Naive thymus-derived CD4-positive, alpha-beta T cell (primary cell): ENCODE measurements at regions of chr17 and their contacts with region 1.

Region 1: DNA sequence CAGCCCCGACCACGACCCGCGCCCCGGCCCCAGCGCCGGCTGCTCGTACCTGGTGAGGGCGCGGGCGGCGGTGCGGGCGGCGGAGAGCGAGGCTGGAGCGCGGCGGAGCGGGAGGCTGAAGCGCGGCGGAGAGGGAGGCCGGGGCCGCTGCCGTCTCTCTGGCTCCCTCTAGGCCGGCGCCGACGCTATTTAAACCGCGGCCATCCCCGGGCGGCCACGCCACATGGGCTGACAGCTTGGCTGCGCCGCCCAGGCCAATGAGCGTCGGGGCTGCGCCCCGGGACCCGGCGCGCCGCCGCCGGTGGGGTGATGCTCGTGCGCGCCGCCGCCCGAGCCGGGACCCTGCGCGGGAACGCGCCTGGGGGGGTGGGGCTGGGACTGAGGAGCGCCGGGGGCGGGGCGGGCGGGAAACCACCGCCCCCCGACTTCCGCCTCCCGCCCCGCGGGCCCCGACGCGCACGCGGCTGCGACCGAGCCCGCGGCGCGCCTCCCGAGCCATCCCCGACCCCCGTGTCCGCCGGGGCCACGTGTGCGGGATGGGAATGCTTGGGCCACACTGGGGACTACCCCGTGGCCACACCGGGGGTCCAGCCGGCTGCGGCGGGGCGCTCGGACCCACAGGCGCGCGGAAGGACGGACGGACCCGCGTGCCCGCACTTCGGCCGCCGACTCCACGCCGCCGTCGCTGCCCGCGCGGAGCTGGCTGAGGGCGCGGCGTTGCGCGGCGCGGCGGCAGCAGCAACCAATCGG is at the start of gene FASN:
- DNase-seq: peak; percentile 84 to 93 (median 90)
- ATAC-seq: peak; percentile 87
- H3K4me3 ChIP-seq: peak within 1 kb of the TSS; percentile 61
- H3K4me3 Mint-ChIP-seq: peak within 1 kb of the TSS in 9 of 10 donors; percentile 36 to 84 (median 69)
- H3K27ac ChIP-seq: peak within 1 kb of the TSS; percentile 97
- H3K27ac Mint-ChIP-seq: peak within 1 kb of the TSS in 4 of 9 donors; percentile 63 to 80 (median 72)
- H3K4me1 ChIP-seq: peaks cover 4 to 12% of the 10 kb centered on the region in 2 donors
- H3K4me1 Mint-ChIP-seq: peaks cover 0 to 14% (median 7%) of the 10 kb centered on the region in 7 donors
- H3K27me3 ChIP-seq: no peaks in the 10 kb centered on the region
- H3K27me3 Mint-ChIP-seq: no peaks in the 10 kb centered on the region
- total RNA-seq, gene FASN: 24.3 to 168 (median 59.0) TPM

Region 2: DNA sequence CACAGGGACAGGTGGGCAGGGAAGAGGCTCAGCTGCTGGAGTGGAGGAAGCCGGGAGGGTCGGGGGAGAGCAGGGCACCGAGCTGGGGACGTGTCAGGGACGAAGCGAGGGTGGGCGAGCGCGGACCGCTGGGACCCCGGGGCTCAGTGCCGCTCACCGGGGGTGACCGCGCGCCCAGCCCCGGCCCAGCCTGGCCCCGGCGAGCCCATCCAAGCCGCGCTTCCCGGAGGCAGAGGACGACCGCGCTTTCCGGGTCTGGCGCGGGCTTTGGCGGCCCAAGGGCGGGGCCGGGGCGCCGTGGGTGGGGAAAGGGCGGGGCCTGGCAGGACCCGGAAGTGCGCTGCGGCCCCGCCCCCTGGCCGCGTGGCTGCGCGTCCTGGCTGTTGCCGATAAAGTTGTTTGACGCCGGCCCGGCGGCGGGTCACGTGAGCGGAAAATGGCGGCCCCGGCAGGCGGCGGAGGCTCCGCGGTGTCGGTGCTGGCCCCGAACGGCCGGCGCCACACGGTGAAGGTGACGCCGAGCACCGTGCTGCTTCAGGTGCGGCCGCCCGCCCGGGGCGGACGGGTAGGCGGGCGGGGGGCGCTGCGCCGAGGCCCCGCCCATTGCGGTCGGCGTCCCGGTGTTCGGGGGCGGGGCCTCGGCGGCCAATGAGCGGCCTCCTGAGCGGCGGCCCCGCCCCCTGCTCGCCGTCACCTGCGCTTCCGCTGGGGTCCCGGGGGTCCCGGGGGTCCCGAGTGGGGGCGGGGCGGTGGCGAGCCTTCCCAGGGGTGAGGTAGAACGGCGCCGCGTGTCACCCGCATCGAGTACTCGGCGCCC is 120.8 kb before region 1 on chr17 and contains the start of gene ASPSCR1:
- CTCF ChIA-PET with region 1: no interaction called
- POLR2A ChIA-PET with region 1: interaction called, 3 read pairs
- intact Hi-C with region 1: loop called in 1 of 2 experiments (anchors 1 kb)
- DNase-seq: peak; percentile 86 to 96 (median 93)
- ATAC-seq: peak; percentile 98
- H3K4me3 ChIP-seq: peak within 1 kb of the TSS; percentile 79
- H3K4me3 Mint-ChIP-seq: peak within 1 kb of the TSS; percentile 93 to 99 (median 96)
- H3K27ac ChIP-seq: peak within 1 kb of the TSS; percentile 90
- H3K27ac Mint-ChIP-seq: peak within 1 kb of the TSS; percentile 94 to 99 (median 97)
- H3K4me1 ChIP-seq: peaks cover 16 to 19% of the 10 kb centered on the region in 2 donors
- H3K4me1 Mint-ChIP-seq: peaks cover 26 to 51% (median 38%) of the 10 kb centered on the region in 7 donors
- H3K27me3 ChIP-seq: no peaks in the 10 kb centered on the region
- H3K27me3 Mint-ChIP-seq: peaks cover 0 to 7% (median 0%) of the 10 kb centered on the region in 5 donors
- total RNA-seq, gene ASPSCR1: 36.4 to 46.7 (median 46.0) TPM

Region 3: DNA sequence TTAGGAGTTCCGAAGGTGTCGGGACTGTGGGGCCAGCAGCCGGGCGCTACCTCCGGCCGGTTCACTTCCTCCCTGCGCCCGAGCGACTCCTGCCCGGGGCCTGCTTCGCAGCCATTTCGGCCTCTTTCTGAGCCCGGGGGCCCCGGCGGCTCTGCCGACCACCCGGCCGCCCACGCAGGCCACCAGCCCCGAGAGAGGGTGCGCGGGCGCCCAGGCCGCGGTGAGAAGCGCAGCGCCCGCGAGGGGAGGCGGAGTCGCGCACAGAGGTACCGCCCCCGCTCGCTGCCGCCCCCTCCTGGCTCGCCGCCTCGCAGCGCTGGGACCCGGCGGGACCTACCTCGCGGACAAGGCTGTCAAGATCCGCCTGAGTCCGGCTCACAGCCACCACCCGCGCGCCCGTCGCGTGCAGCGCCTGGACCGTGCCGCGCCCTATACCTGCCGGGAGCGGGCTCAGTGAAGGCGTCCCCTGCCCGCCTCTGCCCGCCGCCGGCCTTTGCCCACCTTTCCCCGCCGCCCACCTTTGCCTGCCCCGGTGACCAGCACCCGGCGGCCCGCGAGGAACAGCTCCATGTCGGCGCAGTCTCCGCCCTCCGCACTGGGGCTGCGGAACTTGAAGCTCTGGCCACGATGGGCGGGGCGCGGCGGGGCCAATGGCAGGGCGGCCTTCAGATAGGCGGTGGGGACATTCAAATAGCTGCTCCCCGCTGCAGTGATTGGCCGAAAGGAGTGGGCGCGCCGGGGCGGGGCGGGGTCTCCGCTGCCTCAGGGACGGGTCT is 60.9 kb before region 1 on chr17 and contains the start of gene DCXR:
- CTCF ChIA-PET with region 1: interaction called, 3 read pairs
- POLR2A ChIA-PET with region 1: interaction called, 4 read pairs
- intact Hi-C with region 1: loop called (anchors 1 to 10 kb)
- DNase-seq: peak; percentile 87 to 97 (median 93)
- ATAC-seq: peak; percentile 96
- H3K4me3 ChIP-seq: peak within 1 kb of the TSS; percentile 71
- H3K4me3 Mint-ChIP-seq: peak within 1 kb of the TSS; percentile 82 to 94 (median 89)
- H3K27ac ChIP-seq: peak within 1 kb of the TSS; percentile 75
- H3K27ac Mint-ChIP-seq: peak within 1 kb of the TSS; percentile 61 to 94 (median 90)
- H3K4me1 ChIP-seq: peaks cover 7% of the 10 kb centered on the region in 2 donors
- H3K4me1 Mint-ChIP-seq: peaks cover 14 to 29% (median 24%) of the 10 kb centered on the region in 7 donors
- H3K27me3 ChIP-seq: no peaks in the 10 kb centered on the region
- H3K27me3 Mint-ChIP-seq: no peaks in the 10 kb centered on the region
- total RNA-seq, gene DCXR: 63.0 to 130 (median 83.6) TPM

Region 4: GRCh38 chr17:82065638-82066303 is 32.5 kb before region 1 on chr17 and contains the start of gene DUS1L:
- CTCF ChIA-PET with region 1: no interaction called
- POLR2A ChIA-PET with region 1: interaction called, 4 read pairs
- intact Hi-C with region 1: loop called (anchors 1 kb)
- DNase-seq: peak; percentile 55 to 87 (median 71)
- ATAC-seq: peak; percentile 95
- H3K4me3 ChIP-seq: peak within 1 kb of the TSS; percentile 66
- H3K4me3 Mint-ChIP-seq: peak within 1 kb of the TSS; percentile 73 to 91 (median 82)
- H3K27ac ChIP-seq: peak within 1 kb of the TSS; percentile 86
- H3K27ac Mint-ChIP-seq: peak within 1 kb of the TSS; percentile 86 to 95 (median 93)
- H3K4me1 ChIP-seq: peaks cover 8 to 27% of the 10 kb centered on the region in 2 donors
- H3K4me1 Mint-ChIP-seq: peaks cover 0 to 18% (median 10%) of the 10 kb centered on the region in 7 donors
- H3K27me3 ChIP-seq: no peaks in the 10 kb centered on the region
- H3K27me3 Mint-ChIP-seq: no peaks in the 10 kb centered on the region
- total RNA-seq, gene DUS1L: 127 to 157 (median 147) TPM

Region 5: DNA sequence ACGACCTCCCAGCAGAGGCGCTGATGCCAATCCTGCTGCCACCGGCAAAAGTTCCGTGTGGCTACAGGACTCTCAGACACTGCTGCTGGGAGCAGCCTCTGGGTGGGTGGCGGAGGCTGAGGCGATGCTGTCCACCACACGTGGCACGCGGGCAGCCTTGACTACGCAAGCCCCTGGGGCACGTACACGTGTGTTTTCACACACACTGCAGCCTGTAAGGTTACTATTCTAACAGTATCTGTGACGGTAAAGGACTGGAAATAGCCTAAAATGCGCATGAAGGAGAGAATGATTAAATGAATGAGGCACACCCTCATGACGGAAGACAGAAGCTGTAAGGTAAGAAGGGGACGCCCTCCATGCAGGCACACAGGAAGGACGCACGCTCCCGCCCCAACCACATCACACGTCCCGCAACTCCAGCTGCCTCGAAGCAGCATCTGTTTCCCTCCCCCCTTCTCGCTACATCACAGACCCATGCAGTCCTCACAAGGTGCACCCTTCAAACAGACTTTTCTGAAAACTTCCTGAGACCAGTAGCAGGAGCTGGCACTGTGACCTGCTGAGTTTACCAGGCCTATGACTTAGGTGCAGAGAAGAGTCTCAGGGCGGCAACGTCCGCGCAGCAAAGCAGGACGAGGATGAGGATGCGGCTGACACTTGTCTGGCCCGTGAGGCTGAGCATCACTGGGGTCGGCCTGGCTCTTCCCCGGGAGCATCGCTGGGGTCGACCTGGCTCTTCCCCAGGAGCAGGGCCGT is 28.5 kb after region 1 on chr17:
- CTCF ChIA-PET with region 1: interaction called, 12 read pairs
- POLR2A ChIA-PET with region 1: interaction called, 28 read pairs
- intact Hi-C with region 1: loop called in 1 of 2 experiments (anchors 1 kb)
- DNase-seq: peak; percentile 51 to 99 (median 98)
- ATAC-seq: peak; percentile 92
- H3K4me3 ChIP-seq: peak overlapping the region; percentile 36
- H3K4me3 Mint-ChIP-seq: peak overlapping the region; percentile 71 to 87 (median 84)
- H3K27ac ChIP-seq: peak overlapping the region; percentile 97
- H3K27ac Mint-ChIP-seq: peak overlapping the region; percentile 93 to 100 (median 98)
- H3K4me1 ChIP-seq: peaks cover 36 to 78% of the 10 kb centered on the region in 2 donors
- H3K4me1 Mint-ChIP-seq: peaks cover 33 to 83% (median 65%) of the 10 kb centered on the region in 7 donors
- H3K27me3 ChIP-seq: no peaks in the 10 kb centered on the region
- H3K27me3 Mint-ChIP-seq: no peaks in the 10 kb centered on the region

Region 6: DNA sequence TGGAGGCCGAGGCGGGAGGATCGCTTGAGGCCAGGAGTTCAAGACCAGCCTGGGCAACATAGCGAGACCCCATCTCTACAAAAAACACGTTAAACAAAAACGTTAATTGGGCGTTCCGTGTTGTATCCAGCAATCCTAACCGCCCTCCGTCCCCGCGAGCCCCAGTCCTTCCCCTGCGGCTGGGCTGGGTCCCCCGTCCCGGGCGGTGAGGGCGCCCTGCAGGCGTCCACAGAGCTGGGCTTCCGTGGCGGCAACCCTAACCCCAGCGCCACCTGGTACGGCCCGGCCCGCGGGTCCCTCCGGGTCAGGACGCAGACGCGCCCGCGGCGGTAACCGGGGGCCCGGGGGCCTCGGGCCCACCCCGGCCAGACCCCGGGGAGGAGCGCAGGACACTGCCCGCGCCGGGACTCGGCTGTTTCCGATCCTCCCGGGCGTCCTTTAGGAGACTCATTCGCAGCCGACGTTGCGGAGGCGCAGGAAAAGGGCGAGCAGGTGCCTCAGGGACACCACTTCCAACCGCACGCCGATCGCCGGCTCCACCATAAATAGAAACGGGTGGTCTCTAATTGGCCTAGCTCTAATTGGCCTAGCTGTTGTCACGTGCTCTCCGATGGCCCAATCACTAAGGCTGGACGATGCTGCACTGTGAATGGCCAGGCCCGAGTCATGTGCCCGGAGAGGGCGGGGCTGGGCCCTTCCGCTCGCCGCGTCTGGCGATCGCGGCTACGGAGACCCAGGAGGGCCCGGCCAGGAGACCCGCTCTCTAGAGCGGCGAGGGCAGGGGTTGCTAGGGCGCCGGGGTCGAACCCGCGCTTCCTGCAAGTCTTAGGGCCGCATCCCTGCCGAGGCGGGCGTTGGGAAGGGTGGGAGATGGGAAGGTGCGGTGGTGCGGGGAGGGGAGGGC is 194.3 kb after region 1 on chr17:
- CTCF ChIA-PET with region 1: no interaction called
- POLR2A ChIA-PET with region 1: no interaction called
- intact Hi-C with region 1: loop called in 1 of 2 experiments (anchors 1 kb)
- DNase-seq: peak; percentile 76 to 94 (median 91)
- ATAC-seq: peak; percentile 95
- H3K4me3 ChIP-seq: peak overlapping the region; percentile 72
- H3K4me3 Mint-ChIP-seq: peak overlapping the region; percentile 83 to 94 (median 91)
- H3K27ac ChIP-seq: peak overlapping the region; percentile 99
- H3K27ac Mint-ChIP-seq: peak overlapping the region; percentile 86 to 96 (median 92)
- H3K4me1 ChIP-seq: peaks cover 18 to 21% of the 10 kb centered on the region in 2 donors
- H3K4me1 Mint-ChIP-seq: peaks cover 14 to 54% (median 43%) of the 10 kb centered on the region in 7 donors
- H3K27me3 ChIP-seq: no peaks in the 10 kb centered on the region
- H3K27me3 Mint-ChIP-seq: no peaks in the 10 kb centered on the region